ENCODE measurements at regions of chr4 and their contacts with region 1.

Region 1: GRCh38 chr4:56907489-56908205 is at the start of gene REST:
- DNase-seq: peak; percentile 90
- ATAC-seq: peak; percentile 59
- H3K4me3 Mint-ChIP-seq: peak within 1 kb of the TSS; percentile 91
- H3K27ac Mint-ChIP-seq: peak within 1 kb of the TSS; percentile 77
- H3K4me1 Mint-ChIP-seq: peaks cover 41% of the 10 kb centered on the region
- H3K27me3 Mint-ChIP-seq: no peaks in the 10 kb centered on the region
- CTCF ChIP-seq: no peak
- total RNA-seq, gene REST: 48.3 and 49.1 TPM in 2 replicates

Region 2: GRCh38 chr4:56387023-56388001 is 520.3 kb before region 1 on chr4 and contains the start of gene AASDH:
- CTCF ChIA-PET with region 1: no interaction called
- POLR2A ChIA-PET with region 1: interaction called, 22 read pairs
- intact Hi-C with region 1: loop called (anchors 1 kb)
- DNase-seq: peak; percentile 96
- ATAC-seq: peak; percentile 90
- H3K4me3 Mint-ChIP-seq: peak within 1 kb of the TSS; percentile 93
- H3K27ac Mint-ChIP-seq: peak within 1 kb of the TSS; percentile 99
- H3K4me1 Mint-ChIP-seq: peaks cover 27% of the 10 kb centered on the region
- H3K27me3 Mint-ChIP-seq: no peaks in the 10 kb centered on the region
- CTCF ChIP-seq: no peak
- total RNA-seq, gene AASDH: 12.8 and 14.2 TPM in 2 replicates

Region 3: GRCh38 chr4:56728512-56728911 is 179.1 kb before region 1 on chr4:
- CTCF ChIA-PET with region 1: no interaction called
- POLR2A ChIA-PET with region 1: no interaction called
- intact Hi-C with region 1: no loop called
- DNase-seq: no peak
- ATAC-seq: no peak
- H3K4me3 Mint-ChIP-seq: no peak overlapping the region
- H3K27ac Mint-ChIP-seq: no peak overlapping the region
- H3K4me1 Mint-ChIP-seq: peaks cover 9% of the 10 kb centered on the region
- H3K27me3 Mint-ChIP-seq: no peaks in the 10 kb centered on the region
- CTCF ChIP-seq: no peak

Region 4: DNA sequence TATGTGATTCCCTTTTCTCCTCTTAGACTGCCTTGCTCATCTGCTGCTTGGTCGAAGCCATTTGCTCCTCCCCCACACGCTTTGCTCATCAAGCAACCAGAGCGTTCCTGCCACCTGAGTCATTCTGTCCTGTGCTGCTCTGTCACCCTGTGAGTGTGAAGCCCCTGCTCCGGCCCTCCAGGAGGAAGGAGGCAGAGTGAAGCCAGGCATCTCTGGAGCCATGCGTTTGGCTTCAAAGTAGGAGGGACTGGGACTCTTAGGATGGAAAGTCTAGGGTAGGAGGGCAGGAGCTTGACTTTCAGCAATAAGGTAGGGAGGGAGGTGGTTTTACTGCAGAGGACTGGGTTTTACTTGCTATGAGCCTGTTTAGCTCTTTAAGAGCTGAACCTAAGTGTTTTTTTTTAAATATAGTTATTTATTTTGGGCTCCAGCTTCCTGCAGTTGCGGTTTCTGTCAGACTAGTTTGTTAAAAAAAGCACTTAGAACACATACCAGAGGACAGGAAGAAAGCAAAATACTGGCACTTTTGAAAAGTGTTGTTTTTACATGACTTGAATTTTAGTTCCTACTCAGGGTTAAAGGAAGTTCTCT is 149.7 kb before region 1 on chr4:
- CTCF ChIA-PET with region 1: no interaction called
- POLR2A ChIA-PET with region 1: no interaction called
- intact Hi-C with region 1: loop called (anchors 5 kb)
- DNase-seq: peak; percentile 55
- ATAC-seq: peak; percentile 96
- H3K4me3 Mint-ChIP-seq: peak overlapping the region; percentile 81
- H3K27ac Mint-ChIP-seq: peak overlapping the region; percentile 96
- H3K4me1 Mint-ChIP-seq: peaks cover 63% of the 10 kb centered on the region
- H3K27me3 Mint-ChIP-seq: no peaks in the 10 kb centered on the region
- CTCF ChIP-seq: no peak

Region 5: GRCh38 chr4:56821381-56822243 is 86.0 kb before region 1 on chr4 and contains the start of gene SPINK2:
- CTCF ChIA-PET with region 1: no interaction called
- POLR2A ChIA-PET with region 1: no interaction called
- intact Hi-C with region 1: loop called (anchors 2 kb)
- DNase-seq: peak; percentile 58
- ATAC-seq: peak; percentile 87
- H3K4me3 Mint-ChIP-seq: peak within 1 kb of the TSS; percentile 81
- H3K27ac Mint-ChIP-seq: peak within 1 kb of the TSS; percentile 24
- H3K4me1 Mint-ChIP-seq: peaks cover 31% of the 10 kb centered on the region
- H3K27me3 Mint-ChIP-seq: no peaks in the 10 kb centered on the region
- CTCF ChIP-seq: no peak
- total RNA-seq, gene SPINK2: 1.2 TPM in 1 of 2 replicates, not detected in the other

Region 6: DNA sequence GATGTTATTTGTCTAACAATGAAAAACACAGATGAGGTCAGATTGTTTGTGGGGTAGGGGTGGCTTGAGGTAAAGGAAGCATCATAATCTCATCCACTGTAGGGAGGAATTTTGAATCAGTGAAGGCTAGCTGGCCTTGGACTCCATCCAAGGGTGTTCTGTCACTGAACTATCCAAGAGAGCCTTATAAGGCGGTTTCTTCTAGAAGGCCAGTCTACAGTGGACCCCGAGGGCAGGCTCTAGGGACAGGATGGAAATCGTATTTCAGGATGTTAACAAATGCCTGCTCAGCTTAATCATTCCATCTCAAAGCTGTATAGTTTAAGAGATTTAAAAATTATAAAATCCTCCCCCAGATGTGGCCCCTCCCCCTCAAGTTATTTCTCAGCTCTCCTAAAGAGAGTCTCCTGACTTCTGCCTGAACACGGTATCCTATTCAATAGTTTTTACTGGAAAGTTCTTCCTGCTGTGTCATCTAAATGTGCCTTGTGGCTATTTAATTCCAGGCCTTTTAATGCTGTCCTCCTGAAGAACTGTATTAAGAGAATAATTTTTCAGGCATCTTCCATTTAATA is 194.5 kb after region 1 on chr4:
- CTCF ChIA-PET with region 1: no interaction called
- POLR2A ChIA-PET with region 1: no interaction called
- intact Hi-C with region 1: no loop called
- DNase-seq: no peak
- ATAC-seq: no peak
- H3K4me3 Mint-ChIP-seq: no peak overlapping the region
- H3K27ac Mint-ChIP-seq: no peak overlapping the region
- H3K4me1 Mint-ChIP-seq: no peaks in the 10 kb centered on the region
- H3K27me3 Mint-ChIP-seq: peaks cover 11% of the 10 kb centered on the region
- CTCF ChIP-seq: no peak